Activated CD4-positive, alpha-beta T cell treated with anti-CD3 and anti-CD28 coated beads for 36 hours (primary cell): ENCODE measurements at regions of chr12 and their contacts with region 1.

Region 1: DNA sequence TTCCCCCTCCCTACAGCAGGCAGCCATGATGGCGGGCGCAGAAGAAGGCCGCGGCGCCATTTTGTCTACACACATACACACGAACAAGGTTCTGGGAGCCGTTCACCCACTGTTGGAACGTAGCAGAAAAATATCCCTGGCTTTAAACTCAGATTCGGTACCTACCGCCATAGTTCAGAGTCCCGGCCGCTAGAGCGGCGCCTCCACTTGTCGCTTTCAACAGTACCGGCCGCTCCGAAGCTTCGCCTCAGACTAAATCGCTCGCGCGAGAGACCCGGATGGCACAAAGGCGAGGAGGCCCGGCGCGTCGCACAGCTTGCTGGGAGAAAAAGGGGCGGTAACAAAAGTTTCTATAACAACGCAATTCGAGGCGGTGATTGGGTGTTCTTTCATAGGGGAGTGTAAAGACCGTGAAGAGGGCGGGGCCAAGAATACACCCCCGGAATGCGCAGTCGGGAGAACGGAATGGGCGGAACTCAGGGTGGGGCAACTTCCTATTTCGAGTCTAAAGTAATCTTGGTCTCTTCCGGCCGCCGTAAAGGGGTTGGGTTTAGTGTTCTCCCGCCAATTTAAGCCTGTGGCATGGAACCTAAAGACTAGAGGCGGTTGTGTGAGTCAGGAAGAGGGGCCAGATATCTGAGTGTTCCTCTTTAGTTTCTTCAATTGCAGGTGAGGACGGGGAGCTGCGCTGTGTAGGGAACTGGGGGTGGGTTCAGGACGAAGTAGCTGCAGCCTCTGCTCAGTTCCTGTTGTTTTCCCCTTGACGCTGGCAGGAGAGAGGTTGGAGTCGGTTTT is at the starts of genes KNTC1 and RSRC2:
- DNase-seq: peak; percentile 99
- ATAC-seq: peak; percentile 93
- H3K4me3 Mint-ChIP-seq: no peak within 1 kb of the TSS
- H3K27ac Mint-ChIP-seq: no peak within 1 kb of the TSS
- H3K4me1 Mint-ChIP-seq: peaks cover 37% of the 10 kb centered on the region
- H3K27me3 Mint-ChIP-seq: no peaks in the 10 kb centered on the region
- total RNA-seq, gene KNTC1: 136 to 175 TPM
- total RNA-seq, gene RSRC2: 92.7 to 105 TPM

Region 2: GRCh38 chr12:121719926-121720414 is 806.9 kb before region 1 on chr12:
- CTCF ChIA-PET with region 1: no interaction called
- POLR2A ChIA-PET with region 1: no interaction called
- intact Hi-C with region 1: no loop called
- DNase-seq: no peak
- ATAC-seq: no peak
- H3K4me3 Mint-ChIP-seq: no peak overlapping the region
- H3K27ac Mint-ChIP-seq: no peak overlapping the region
- H3K4me1 Mint-ChIP-seq: no peaks in the 10 kb centered on the region
- H3K27me3 Mint-ChIP-seq: no peaks in the 10 kb centered on the region

Region 3: DNA sequence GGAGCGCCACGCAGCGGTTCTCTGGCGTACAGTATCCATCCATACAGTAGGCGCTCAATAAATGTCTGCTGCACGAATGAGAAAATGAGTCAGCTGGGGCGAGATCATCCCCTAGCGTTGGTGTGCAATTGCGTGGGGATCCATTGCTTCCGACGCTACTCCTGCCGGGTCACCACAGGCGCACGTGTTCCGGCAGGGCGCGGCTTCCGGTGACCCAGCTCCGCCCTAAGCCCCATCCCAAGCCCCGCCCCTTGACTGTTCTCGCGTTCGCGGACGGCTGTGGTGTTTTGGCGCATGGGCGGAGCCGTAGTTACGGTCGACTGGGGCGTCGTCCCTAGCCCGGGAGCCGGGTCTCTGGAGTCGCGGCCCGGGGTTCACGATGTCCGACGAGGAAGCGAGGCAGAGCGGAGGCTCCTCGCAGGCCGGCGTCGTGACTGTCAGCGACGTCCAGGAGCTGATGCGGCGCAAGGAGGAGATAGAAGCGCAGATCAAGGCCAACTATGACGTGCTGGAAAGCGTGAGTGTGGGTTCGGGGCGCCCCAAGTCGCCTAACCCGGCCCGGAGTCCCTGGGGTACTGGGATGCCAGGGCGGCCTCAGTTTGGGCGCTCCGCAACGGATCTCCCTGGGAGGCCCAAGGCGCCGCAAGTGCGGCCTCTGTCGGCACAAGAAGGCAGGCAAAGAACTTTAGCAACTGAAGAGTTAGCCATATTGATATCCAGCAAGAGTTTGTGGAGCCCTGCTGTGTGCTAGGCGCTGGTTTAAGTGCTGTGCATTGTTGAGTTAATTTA is 638.2 kb before region 1 on chr12 and contains the start of gene PSMD9:
- CTCF ChIA-PET with region 1: no interaction called
- POLR2A ChIA-PET with region 1: no interaction called
- intact Hi-C with region 1: loop called in 1 of 2 experiments (anchors 1 kb)
- DNase-seq: peak; percentile 99
- ATAC-seq: peak; percentile 94
- H3K4me3 Mint-ChIP-seq: peak within 1 kb of the TSS; percentile 89
- H3K27ac Mint-ChIP-seq: peak within 1 kb of the TSS; percentile 98
- H3K4me1 Mint-ChIP-seq: peaks cover 33% of the 10 kb centered on the region
- H3K27me3 Mint-ChIP-seq: no peaks in the 10 kb centered on the region
- total RNA-seq, gene PSMD9: 50.4 to 56.2 TPM

Region 4: DNA sequence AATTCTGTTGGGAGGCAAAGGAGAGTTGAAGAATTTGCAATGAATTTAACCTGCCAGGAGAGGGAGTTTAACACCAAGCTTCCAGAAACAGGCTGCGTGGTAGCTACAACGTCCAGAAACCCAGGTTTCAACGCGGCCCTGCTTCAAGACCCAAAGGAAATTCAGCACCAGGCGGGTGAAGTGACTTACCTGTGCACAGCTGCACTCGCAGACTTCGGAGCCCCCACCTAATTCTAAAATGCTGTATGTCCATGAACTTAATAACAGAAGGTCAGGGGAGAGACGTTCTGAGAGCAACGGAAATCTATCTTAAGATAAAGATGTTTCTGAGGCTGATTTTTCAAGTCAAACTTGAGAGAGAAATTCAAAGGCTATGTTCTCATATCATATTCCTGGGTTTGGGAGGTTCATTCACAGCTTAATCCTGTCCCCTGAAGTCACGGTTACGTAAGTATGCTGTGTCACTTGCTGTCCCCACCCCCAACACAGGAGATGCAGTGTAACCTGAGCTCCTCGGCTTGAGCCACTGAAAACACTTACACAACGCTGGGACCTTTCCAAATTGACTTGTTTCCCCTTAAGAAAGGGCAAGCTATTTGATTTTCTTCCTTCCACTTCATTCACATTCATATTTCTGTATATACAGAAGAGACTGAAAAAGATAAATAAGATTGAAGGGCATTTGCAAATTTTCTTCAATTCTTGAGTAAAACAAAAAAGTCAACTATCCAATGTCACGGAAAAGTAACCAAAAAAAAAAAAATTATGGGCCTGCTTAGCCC is 127.1 kb before region 1 on chr12:
- CTCF ChIA-PET with region 1: interaction called, 5 read pairs
- POLR2A ChIA-PET with region 1: interaction called, 11 read pairs
- intact Hi-C with region 1: loop called in 1 of 2 experiments (anchors 1 kb)
- DNase-seq: peak; percentile 73
- ATAC-seq: peak; percentile 37
- H3K4me3 Mint-ChIP-seq: peak overlapping the region; percentile 43
- H3K27ac Mint-ChIP-seq: peak overlapping the region; percentile 86
- H3K4me1 Mint-ChIP-seq: peaks cover 50% of the 10 kb centered on the region
- H3K27me3 Mint-ChIP-seq: no peaks in the 10 kb centered on the region

Region 5: DNA sequence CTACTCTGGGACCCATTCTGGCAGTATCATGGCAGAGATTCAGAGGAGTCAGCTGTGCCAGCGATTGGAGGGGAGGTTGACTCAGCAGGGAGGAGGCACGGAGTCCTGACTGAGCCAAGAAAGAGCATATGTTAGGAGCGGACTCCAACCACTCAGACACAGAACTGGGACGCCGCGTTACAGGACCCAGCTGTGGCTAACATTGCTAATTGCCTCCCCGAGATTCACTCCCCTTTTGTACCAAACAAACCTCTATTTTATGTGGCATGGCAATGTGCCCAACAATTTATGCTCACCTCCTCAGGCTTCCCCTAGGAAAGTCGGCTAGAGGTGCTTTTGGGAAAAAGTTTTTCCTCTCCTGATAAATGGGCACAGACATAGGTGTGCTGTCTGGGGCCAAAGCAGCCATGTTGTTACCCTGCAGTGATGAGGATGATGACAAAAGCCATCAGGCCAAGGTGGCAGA is 89.2 kb before region 1 on chr12:
- CTCF ChIA-PET with region 1: no interaction called
- POLR2A ChIA-PET with region 1: no interaction called
- intact Hi-C with region 1: no loop called
- DNase-seq: no peak
- ATAC-seq: no peak
- H3K4me3 Mint-ChIP-seq: no peak overlapping the region
- H3K27ac Mint-ChIP-seq: no peak overlapping the region
- H3K4me1 Mint-ChIP-seq: no peaks in the 10 kb centered on the region
- H3K27me3 Mint-ChIP-seq: no peaks in the 10 kb centered on the region

Region 6: GRCh38 chr12:122500685-122501488 is 26.0 kb before region 1 on chr12 and contains the start of gene ZCCHC8:
- CTCF ChIA-PET with region 1: interaction called, 14 read pairs
- POLR2A ChIA-PET with region 1: interaction called, 53 read pairs
- intact Hi-C with region 1: loop called (anchors 1 kb)
- DNase-seq: peak; percentile 99
- ATAC-seq: peak; percentile 95
- H3K4me3 Mint-ChIP-seq: peak within 1 kb of the TSS; percentile 97
- H3K27ac Mint-ChIP-seq: peak within 1 kb of the TSS; percentile 98
- H3K4me1 Mint-ChIP-seq: peaks cover 32% of the 10 kb centered on the region
- H3K27me3 Mint-ChIP-seq: no peaks in the 10 kb centered on the region
- total RNA-seq, gene ZCCHC8: 34.7 to 39.1 TPM

Region 7: GRCh38 chr12:122726080-122726558 is 199.2 kb after region 1 on chr12:
- CTCF ChIA-PET with region 1: no interaction called
- POLR2A ChIA-PET with region 1: no interaction called
- intact Hi-C with region 1: no loop called
- DNase-seq: peak; percentile 36
- ATAC-seq: peak; percentile 48
- H3K4me3 Mint-ChIP-seq: peak overlapping the region; percentile 49
- H3K27ac Mint-ChIP-seq: peak overlapping the region; percentile 62
- H3K4me1 Mint-ChIP-seq: peaks cover 67% of the 10 kb centered on the region
- H3K27me3 Mint-ChIP-seq: no peaks in the 10 kb centered on the region

Region 8: DNA sequence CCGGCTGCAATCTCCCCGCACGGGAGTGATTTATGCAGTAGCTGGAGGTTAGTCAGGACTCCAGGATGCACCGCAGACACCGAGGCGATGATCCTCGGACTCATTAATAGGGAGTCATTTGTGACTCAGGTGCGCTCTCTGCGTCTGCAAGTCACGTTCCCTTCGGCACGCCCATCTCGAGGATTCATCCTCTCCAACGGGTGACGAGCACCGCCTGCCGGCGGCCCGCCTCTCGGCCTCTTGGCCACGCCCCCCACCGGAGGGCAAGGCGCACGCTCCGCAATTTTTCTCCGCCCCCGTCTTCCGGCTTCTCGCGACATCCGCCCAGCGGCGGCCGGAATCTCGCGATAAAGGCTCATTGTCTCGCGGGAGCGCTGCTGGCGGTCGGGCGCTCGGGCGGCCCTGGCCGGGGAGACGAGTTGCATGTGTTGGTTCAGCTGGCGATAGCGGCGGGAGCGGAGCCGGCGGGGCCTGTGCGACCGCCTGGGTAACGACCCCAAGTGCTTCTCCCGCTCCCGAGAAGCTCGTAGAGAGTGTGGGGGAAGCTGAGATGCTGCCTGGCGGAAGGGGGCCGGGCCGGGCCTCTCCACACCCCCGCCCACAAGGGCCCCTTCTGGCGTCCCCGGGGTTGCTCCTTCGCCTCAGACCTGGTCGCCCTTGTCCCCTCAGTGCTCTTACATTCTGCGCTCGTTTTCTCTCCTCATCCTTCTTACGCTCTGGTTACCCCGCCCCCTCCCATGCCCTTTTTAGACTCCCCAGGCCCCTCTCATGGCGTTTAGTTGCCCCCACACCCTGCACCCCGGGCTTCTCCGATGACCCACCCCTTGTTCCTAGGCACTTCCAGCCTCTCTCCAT is 225.8 kb after region 1 on chr12 and contains the start of gene DENR:
- CTCF ChIA-PET with region 1: no interaction called
- POLR2A ChIA-PET with region 1: interaction called, 3 read pairs
- intact Hi-C with region 1: loop called (anchors 1 kb)
- DNase-seq: peak; percentile 100
- ATAC-seq: peak; percentile 95
- H3K4me3 Mint-ChIP-seq: peak within 1 kb of the TSS; percentile 92
- H3K27ac Mint-ChIP-seq: peak within 1 kb of the TSS; percentile 96
- H3K4me1 Mint-ChIP-seq: peaks cover 53% of the 10 kb centered on the region
- H3K27me3 Mint-ChIP-seq: no peaks in the 10 kb centered on the region
- total RNA-seq, gene DENR: 64.1 to 76.9 TPM

Region 9: DNA sequence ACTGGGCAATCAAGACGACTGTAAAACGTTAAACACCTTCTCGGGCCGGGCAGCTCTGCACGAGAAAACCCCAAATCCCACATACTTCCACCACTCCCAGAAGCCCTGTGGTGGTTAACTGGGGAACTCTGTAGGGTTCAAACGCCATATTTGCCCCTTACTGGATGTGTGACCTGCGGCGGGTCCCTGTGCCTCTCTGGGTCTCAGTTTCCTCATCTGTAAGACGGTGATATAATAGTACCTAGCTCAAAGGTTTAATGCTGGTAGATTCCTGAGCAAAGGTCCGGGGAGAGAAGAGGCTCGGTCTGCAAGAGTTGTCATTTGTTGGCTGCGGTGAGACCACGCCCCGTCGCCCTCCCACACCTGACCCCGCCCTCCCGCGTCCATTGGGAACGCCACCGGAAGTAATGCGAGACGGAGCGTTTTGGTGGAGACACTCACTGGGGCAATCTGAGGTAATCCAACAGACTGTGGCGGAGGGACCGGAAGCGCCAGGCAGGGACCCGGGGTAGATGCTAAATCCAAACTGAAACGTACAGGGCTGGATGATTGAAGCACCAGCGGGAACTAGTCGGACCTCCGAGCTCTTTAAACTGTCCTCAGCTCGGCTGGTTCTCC is 447.5 kb after region 1 on chr12:
- CTCF ChIA-PET with region 1: no interaction called
- POLR2A ChIA-PET with region 1: no interaction called
- intact Hi-C with region 1: loop called in 1 of 2 experiments (anchors 2 kb)
- DNase-seq: peak; percentile 99
- ATAC-seq: peak; percentile 86
- H3K4me3 Mint-ChIP-seq: peak overlapping the region; percentile 95
- H3K27ac Mint-ChIP-seq: peak overlapping the region; percentile 100
- H3K4me1 Mint-ChIP-seq: peaks cover 21% of the 10 kb centered on the region
- H3K27me3 Mint-ChIP-seq: no peaks in the 10 kb centered on the region

Region 10: DNA sequence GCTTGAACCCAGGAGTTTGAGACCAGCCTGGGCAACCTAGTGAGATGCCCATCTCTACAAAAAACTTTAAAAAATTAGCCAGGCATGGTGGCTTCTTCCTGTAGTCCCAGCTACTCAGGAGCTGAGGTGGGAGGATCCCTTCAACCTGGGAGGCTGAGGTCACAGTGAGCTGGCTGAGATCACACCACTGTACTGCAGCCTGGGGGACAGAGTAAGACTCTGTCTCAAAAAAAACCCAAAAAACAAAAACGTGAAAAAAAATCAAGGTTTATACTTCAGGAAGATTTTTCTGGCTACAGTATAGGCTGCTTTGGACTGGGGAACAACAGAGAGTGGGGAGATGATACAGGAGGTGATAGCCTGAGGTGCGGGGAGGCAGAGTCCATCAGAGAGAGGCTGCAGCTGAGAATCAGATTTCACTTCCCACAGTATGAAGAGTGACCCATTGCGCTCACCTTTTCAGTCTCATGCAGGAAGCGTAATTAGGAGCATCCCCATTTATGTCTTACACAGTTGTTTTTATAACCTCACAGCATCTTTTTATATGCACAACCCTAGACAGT is 1264.1 kb after region 1 on chr12:
- CTCF ChIA-PET with region 1: no interaction called
- POLR2A ChIA-PET with region 1: no interaction called
- intact Hi-C with region 1: no loop called
- DNase-seq: no peak
- ATAC-seq: no peak
- H3K4me3 Mint-ChIP-seq: no peak overlapping the region
- H3K27ac Mint-ChIP-seq: no peak overlapping the region
- H3K4me1 Mint-ChIP-seq: no peaks in the 10 kb centered on the region
- H3K27me3 Mint-ChIP-seq: no peaks in the 10 kb centered on the region